Activated naive CD4-positive, alpha-beta T cell treated with anti-CD3 and anti-CD28 coated beads for 36 hours (primary cell): ENCODE measurements at regions of chr21 and their contacts with region 1.

Region 1: GRCh38 chr21:44338971-44339910 is at the start of gene CFAP410:
- DNase-seq: peak; percentile 95
- H3K4me3 Mint-ChIP-seq: peak within 1 kb of the TSS; percentile 83
- H3K27ac Mint-ChIP-seq: peak within 1 kb of the TSS; percentile 86
- H3K4me1 Mint-ChIP-seq: peaks cover 14% of the 10 kb centered on the region
- H3K27me3 Mint-ChIP-seq: no peaks in the 10 kb centered on the region
- total RNA-seq, gene CFAP410: 13.2 to 14.8 TPM

Region 2: DNA sequence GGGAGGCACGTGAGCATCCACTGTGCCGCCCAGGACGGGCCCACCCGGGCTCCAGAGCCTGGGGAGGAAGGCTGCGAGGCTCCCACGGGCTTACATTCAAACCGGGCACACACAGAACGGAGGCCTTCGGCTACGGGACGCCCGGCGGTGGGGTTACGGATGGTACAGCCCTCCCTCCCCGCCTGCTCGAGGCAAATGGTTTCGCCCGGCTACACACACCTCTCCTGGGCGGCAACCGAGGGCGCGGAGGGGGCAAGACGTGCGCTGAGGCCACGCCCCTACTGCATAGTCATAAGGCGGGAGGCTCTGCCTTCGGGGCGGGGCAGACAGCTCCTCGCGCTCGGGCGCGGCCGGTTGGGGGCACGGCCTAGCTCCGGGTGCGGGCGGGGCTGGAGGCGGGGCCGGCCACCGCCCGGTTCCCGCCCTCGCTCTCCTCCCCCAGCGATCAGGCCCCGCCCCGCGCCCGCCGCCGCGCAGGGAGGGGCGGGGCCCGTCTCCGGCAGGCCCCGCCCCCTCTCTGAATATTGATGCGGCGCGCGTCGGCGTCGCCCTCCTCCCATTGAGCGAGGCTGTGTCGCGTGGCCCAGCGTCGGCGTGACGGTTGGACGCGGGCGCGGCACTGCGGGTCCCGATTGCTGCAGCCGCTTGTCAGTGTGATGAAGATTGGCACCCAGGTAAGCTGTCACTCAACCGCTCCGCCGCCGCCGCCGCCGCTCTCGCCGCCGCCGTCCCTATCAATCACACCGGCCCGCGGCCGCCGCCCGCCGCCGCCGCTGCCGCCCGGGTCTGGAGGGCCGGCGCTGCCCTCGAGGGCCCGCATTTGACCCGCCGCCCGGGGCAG is 1365.0 kb before region 1 on chr21 and contains the start of gene PKNOX1:
- CTCF ChIA-PET with region 1: no interaction called
- intact Hi-C with region 1: loop called (anchors 5 kb)
- DNase-seq: peak; percentile 99
- H3K4me3 Mint-ChIP-seq: peak within 1 kb of the TSS; percentile 90
- H3K27ac Mint-ChIP-seq: peak within 1 kb of the TSS; percentile 94
- H3K4me1 Mint-ChIP-seq: peaks cover 34% of the 10 kb centered on the region
- H3K27me3 Mint-ChIP-seq: no peaks in the 10 kb centered on the region
- total RNA-seq, gene PKNOX1: 15.1 to 17.6 TPM

Region 3: DNA sequence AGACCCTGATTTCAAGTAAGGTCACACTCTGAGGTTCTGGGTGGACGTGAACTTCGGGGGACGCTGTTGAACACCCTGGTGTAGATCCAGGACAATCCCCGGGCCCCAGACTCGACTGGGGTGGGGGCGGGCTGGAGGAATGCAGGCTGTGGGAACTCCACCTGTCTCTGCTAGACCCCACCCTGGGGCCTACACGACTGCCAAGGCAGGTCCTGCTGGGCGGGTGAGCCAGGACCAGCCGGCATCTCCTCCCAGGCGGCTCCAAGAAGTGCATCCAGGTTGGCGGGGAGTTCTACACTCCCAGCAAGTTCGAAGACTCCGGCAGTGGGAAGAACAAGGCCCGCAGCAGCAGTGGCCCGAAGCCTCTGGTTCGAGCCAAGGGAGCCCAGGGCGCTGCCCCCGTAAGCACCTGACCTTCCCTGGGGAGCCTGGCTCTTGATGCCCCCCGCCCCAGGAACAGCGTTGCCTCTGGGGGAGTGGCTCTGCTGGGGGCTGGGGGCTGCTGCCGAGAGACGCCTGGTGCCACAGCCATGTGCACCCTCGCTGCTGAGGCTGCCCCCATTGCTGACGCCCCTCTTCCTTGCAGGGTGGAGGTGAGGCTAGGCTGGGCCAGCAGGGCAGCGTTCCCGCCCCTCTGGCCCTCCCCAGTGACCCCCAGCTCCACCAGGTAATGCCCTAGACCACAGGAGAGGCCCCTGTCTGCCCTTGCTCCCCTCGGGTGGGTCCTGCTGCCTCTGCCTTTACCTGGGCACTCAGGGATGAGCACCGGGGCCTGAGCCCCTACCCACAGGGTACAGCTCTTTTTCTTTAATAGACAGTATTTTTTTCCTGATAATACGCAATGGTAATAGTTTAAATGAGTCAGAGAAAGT is 49.6 kb before region 1 on chr21:
- CTCF ChIA-PET with region 1: no interaction called
- intact Hi-C with region 1: no loop called
- DNase-seq: no peak
- H3K4me3 Mint-ChIP-seq: no peak overlapping the region
- H3K27ac Mint-ChIP-seq: no peak overlapping the region
- H3K4me1 Mint-ChIP-seq: peaks cover 3% of the 10 kb centered on the region
- H3K27me3 Mint-ChIP-seq: peaks cover 3% of the 10 kb centered on the region

Region 4: DNA sequence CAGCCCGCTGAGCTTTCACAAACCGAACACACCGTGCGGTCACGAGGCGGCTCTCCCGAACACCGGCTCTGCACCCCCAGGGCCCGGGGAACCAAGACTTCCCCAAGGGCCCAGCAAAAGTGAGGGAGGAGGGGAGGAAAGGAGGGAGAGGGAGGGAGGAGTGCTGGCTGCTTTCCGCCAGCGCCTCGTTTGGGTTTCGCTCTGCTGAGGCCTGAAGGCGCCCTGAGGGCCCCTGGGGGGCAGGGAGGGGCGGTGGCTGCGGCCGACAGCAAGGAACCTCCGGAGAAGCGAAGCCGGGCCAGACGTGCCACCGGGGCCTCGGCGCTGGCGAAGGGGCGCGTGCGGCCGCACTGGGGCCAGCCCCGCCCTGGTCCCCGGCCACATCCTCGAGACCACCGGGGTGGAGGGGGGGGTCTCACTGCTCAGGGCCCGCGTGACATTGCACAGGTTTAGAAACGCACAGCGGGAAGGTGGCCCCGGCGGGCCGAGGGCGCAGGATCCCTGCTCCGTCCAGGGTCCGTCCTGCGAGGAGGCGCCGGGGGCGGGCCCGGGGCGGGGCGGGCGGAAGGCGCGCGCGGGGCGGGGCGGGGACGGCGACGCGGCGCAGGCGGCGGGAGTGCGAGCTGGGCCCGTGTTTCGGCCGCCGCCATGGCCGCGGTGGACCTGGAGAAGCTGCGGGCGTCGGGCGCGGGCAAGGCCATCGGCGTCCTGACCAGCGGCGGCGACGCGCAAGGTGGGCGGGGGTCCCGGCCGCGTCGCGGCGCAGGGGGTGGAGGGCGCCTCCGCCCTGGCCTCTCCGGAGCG is 39.6 kb before region 1 on chr21 and contains the start of gene PFKL:
- CTCF ChIA-PET with region 1: interaction called, 5 read pairs
- intact Hi-C with region 1: loop called (anchors 1 kb)
- DNase-seq: peak; percentile 64
- H3K4me3 Mint-ChIP-seq: peak within 1 kb of the TSS; percentile 78
- H3K27ac Mint-ChIP-seq: peak within 1 kb of the TSS; percentile 87
- H3K4me1 Mint-ChIP-seq: peaks cover 54% of the 10 kb centered on the region
- H3K27me3 Mint-ChIP-seq: no peaks in the 10 kb centered on the region
- total RNA-seq, gene PFKL: 166 to 171 TPM

Region 5: DNA sequence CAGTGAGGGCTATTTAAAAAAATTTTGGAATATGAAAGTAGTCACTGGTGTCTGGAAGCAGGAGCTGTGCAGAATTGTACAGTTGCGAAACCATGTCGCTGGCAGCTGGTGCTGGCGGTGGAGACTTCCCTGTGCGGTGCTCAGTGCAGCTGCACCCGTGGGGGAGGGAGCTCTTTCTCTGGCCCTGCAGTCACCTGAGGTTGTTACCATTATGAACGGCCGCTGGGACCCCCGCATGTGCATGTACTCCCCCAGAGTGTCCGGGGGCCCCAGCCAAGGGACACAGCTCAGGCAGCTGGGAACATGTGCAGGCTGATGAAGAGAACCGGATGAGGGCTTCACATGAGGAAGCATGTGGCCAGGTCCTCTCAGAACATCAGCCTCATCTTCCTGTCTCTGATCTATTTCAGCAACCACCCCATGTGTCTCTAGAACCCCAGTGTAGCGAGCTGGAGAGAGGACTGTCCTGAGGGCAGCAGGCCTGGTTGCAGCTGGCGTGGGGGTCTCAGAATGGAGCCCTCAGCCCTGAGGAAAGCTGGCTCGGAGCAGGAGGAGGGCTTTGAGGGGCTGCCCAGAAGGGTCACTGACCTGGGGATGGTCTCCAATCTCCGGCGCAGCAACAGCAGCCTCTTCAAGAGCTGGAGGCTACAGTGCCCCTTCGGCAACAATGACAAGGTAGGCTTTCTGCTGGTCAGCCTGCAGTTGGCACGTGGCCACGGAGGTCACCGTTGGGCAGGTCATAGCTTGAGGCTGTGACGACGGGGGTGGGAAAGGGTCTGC is 14.1 kb after region 1 on chr21 and contains the start of gene TRPM2:
- CTCF ChIA-PET with region 1: interaction called, 4 read pairs
- intact Hi-C with region 1: loop called (anchors 1 kb)
- DNase-seq: peak; percentile 48
- H3K4me3 Mint-ChIP-seq: peak within 1 kb of the TSS; percentile 40
- H3K27ac Mint-ChIP-seq: peak within 1 kb of the TSS; percentile 44
- H3K4me1 Mint-ChIP-seq: peaks cover 49% of the 10 kb centered on the region
- H3K27me3 Mint-ChIP-seq: peaks cover 4% of the 10 kb centered on the region
- total RNA-seq, gene TRPM2: 2.5 to 3.5 TPM

Region 6: DNA sequence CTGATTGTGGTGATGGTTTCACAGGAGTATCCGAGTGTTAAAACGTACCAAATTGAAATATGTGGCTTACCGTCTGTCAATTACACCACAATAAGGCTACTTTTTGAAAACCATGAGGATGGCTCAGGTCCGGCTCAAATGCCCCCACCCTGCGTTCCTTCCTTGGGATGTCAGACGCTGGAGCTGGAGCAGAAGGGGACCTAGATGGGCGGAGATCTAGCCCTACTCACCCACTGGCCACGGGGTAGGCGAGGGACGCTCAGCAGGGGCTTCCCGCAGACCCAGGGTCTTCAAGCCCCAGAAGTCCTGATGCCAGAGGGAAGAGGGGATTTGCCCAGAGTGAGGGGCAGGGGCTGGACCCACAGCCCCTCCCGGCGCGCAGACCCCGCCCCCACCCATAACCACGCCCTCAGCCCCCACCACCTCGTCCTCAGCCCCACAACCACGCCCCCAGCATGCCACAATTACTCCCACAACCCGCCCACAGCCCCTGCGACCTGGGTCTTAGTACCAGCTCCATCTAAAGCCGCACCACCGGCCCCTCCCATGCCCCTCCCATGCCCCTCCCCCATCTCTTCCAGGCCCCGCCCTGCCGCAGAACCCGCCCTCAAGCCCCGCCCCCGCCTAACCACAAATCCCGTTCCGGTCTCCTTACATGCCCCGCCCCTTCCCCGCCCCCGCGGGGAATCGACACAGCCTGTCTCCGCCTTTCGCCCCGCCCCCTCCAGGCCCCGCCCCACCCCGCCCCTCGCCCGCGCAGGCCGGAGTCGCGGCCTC is 115.7 kb after region 1 on chr21 and contains the start of gene LRRC3:
- CTCF ChIA-PET with region 1: no interaction called
- intact Hi-C with region 1: loop called (anchors 1 kb)
- DNase-seq: peak; percentile 89
- H3K4me3 Mint-ChIP-seq: peak within 1 kb of the TSS; percentile 73
- H3K27ac Mint-ChIP-seq: no peak within 1 kb of the TSS
- H3K4me1 Mint-ChIP-seq: no peaks in the 10 kb centered on the region
- H3K27me3 Mint-ChIP-seq: peaks cover 14% of the 10 kb centered on the region
- total RNA-seq, gene LRRC3: 2.5 to 2.8 TPM

Region 7: GRCh38 chr21:44487831-44488230 is 148.6 kb after region 1 on chr21:
- CTCF ChIA-PET with region 1: no interaction called
- intact Hi-C with region 1: loop called (anchors 10 kb)
- DNase-seq: peak; percentile 77
- H3K4me3 Mint-ChIP-seq: no peak overlapping the region
- H3K27ac Mint-ChIP-seq: no peak overlapping the region
- H3K4me1 Mint-ChIP-seq: peaks cover 3% of the 10 kb centered on the region
- H3K27me3 Mint-ChIP-seq: no peaks in the 10 kb centered on the region

Region 8: DNA sequence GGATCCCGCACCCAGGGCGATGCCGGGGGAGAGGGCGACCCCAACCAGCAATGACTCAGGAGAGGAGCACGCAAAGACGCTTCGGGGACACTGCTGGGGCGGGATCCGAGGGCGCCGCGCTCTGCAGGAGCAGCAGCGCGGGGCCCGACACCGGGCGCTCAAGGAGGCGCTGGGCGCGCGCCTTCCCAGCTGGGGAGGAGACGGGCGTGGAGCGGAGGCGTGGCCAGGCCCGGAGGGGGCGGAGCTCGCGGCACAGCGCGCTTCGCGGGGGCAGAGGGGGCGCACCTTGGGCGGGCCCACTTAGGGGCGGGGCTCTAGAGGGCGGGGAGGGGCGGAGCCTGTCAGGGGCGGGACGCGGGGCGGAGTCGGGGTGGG is 478.3 kb after region 1 on chr21:
- CTCF ChIA-PET with region 1: no interaction called
- intact Hi-C with region 1: loop called (anchors 1 kb)
- DNase-seq: peak; percentile 95
- H3K4me3 Mint-ChIP-seq: peak overlapping the region; percentile 65
- H3K27ac Mint-ChIP-seq: no peak overlapping the region
- H3K4me1 Mint-ChIP-seq: peaks cover 15% of the 10 kb centered on the region
- H3K27me3 Mint-ChIP-seq: no peaks in the 10 kb centered on the region